Sigmoid colon (tissue), 7 donors: ENCODE measurements at regions of chr1 and their contacts with region 1.

Region 1: DNA sequence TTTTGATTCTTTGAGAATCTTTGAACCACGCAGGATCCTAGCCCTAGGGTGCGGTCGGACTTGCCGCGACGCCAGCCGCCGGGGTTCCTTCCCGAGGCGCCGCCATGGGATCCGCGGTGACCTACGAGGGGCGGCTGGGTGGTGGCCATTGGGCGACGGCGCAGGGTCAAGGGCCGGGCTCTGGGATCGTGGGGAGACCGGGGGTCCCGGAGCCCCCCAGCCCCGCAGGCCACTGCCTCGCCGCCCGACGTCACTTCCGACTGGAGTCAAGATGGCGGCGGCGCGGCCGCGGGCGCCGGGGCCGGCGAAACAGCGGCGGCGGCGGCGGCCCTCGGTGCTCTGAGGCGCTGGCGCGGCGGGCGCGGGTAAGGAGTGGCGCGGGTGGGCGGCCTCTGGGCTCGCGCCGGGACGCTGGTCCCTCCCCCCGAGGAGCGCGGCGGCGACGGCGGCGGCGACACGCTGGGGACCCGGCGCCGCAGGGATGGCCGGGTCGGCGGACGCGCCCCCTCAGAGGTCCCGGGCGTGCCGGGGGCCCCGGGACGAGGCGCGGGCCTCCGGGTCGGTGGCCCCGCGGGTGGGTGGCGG is at the start of gene PRDM2:
- DNase-seq: peak; percentile 68
- H3K4me3 ChIP-seq: peak within 1 kb of the TSS; percentile 76 to 89 (median 79)
- H3K27ac ChIP-seq: peak within 1 kb of the TSS; percentile 92 to 95 (median 93)
- H3K4me1 ChIP-seq: peaks cover 2 to 27% (median 12%) of the 10 kb centered on the region in 4 donors
- H3K27me3 ChIP-seq: no peaks in the 10 kb centered on the region
- CTCF ChIP-seq: no peak
- EP300 ChIP-seq: no peak
- POLR2A ChIP-seq: no peak
- total RNA-seq, gene PRDM2: 34.6 to 53.2 (median 37.3) TPM

Region 2: DNA sequence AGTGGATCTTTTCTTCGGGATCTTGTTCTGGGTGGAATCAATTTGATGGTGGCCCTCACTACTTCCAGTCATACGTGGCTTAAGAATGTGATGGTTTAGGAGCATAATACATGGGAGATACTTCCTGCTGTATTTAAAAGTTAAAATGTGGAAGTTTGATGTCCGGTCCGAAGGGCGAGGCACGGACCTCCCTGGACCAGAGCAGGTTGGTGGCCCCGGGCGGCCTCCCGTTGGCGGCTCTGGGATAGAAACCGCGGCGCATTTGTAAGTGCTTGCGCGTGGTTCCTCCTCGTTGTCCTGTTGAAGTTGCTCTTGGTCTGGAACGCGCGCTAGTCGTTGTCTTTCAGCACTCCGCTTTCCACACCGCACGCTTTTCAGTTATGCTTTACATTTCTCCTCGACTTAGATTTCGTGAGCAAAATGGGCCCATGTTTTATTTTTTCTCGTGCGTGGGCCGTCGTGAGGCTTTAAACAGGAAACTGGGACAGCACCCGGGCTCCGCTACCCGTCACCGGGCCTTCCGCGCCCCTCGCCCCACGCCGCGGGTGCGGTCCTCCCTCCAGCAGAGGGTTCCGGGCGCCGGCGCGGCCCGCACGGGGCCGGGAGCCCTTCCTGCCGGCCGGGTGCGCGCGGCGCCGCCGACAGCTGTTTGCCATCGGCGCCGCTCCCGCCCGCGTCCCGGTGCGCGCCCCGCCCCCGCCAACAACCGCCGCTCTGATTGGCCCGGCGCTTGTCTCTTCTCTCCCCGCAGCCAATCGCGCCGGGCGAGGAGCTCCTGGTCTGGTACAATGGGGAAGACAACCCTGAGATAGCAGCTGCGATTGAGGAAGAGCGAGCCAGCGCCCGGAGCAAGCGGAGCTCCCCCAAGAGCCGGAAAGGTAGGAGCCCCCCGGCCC is 48.8 kb after region 1 on chr1:
- intact Hi-C with region 1: loop called (anchors 1 kb)
- DNase-seq: peak; percentile 99
- H3K4me3 ChIP-seq: peak overlapping the region; percentile 64 to 94 (median 74)
- H3K27ac ChIP-seq: peak overlapping the region; percentile 93 to 96 (median 94)
- H3K4me1 ChIP-seq: peaks cover 0 to 38% (median 34%) of the 10 kb centered on the region in 4 donors
- H3K27me3 ChIP-seq: no peaks in the 10 kb centered on the region
- CTCF ChIP-seq: no peak
- EP300 ChIP-seq: no peak
- POLR2A ChIP-seq: peak; percentile 51 to 53